Posterior vena cava (tissue), 2 donors: ENCODE measurements at regions of chr11 and their contacts with region 1.

Region 1: GRCh38 chr11:122167100-122167499 is 51.1 kb upstream of the BLID start:
- DNase-seq: no peak

Region 2: DNA sequence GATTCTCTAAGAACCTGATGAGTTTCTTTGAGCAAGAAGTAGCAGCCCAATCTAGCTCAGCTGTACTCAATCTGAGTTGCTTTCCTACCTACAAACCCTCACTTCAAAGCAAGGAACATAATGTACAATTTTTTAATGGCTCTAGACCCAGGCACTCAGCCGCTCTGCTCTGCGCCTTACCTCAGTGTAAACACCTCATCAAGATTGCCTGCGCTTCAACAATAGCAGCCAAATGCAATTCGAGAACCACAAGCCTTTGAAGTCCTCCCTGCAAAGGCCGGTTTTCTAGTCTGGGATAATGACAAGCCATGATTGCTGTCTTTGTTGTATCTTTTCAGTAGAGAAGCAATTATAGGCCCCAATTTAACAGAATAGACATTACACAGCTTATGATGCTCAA is 753.5 kb after region 1 on chr11:
- intact Hi-C with region 1: loop called in 1 of 2 experiments (anchors 5 kb)
- DNase-seq: no peak